HepG2 (cell line): ENCODE measurements at regions of chr5 and their contacts with region 1.

Region 1: GRCh38 chr5:151002250-151002649 is 18.1 kb upstream of the GPX3 start:
- DNase-seq: peak; percentile 58
- ATAC-seq: peak; percentile 28; the same call in 2 of the 3 replicates
- H3K4me3 ChIP-seq: no peak overlapping the region
- H3K27ac ChIP-seq: no peak overlapping the region
- H3K4me1 ChIP-seq: peaks cover 59% of the 10 kb centered on the region
- H3K27me3 ChIP-seq: no peaks in the 10 kb centered on the region
- CTCF ChIP-seq: peak; percentile 71
- EP300 ChIP-seq: no peak
- POLR2A ChIP-seq: no peak
- RAD21 ChIP-seq: peak; percentile 67

Region 2: GRCh38 chr5:150350524-150351344 is 651.5 kb before region 1 on chr5:
- CTCF ChIA-PET with region 1: no interaction called
- POLR2A ChIA-PET with region 1: no interaction called
- in situ Hi-C with region 1: no loop called
- intact Hi-C with region 1: no loop called
- DNase-seq: peak; percentile 91
- ATAC-seq: peak; percentile 98
- H3K4me3 ChIP-seq: peak overlapping the region in 1 of 3 experiments; percentile 11; a peak in 1 of 6 replicates
- H3K27ac ChIP-seq: no peak overlapping the region
- H3K4me1 ChIP-seq: peaks cover 61% of the 10 kb centered on the region
- H3K27me3 ChIP-seq: no peaks in the 10 kb centered on the region; a peak in 1 of 5 replicates
- CTCF ChIP-seq: peak; percentile 98
- EP300 ChIP-seq: peak in 1 of 2 experiments; percentile 41; a peak in 1 of 4 replicates
- POLR2A ChIP-seq: no peak
- RAD21 ChIP-seq: peak; percentile 93

Region 3: GRCh38 chr5:151020304-151021110 is 18.3 kb after region 1 on chr5 and contains the start of gene GPX3:
- CTCF ChIA-PET with region 1: no interaction called
- POLR2A ChIA-PET with region 1: interaction called, 31 read pairs
- in situ Hi-C with region 1: no loop called
- intact Hi-C with region 1: loop called (anchors 1 kb)
- DNase-seq: peak; percentile 92
- ATAC-seq: peak; percentile 97
- H3K4me3 ChIP-seq: peak within 1 kb of the TSS; percentile 72 to 90 (median 88)
- H3K27ac ChIP-seq: peak within 1 kb of the TSS; percentile 58
- H3K4me1 ChIP-seq: peaks cover 89% of the 10 kb centered on the region
- H3K27me3 ChIP-seq: no peaks in the 10 kb centered on the region; a peak in 1 of 5 replicates
- CTCF ChIP-seq: no peak
- EP300 ChIP-seq: no peak
- POLR2A ChIP-seq: peak; percentile 94 to 100
- RAD21 ChIP-seq: no peak
- total RNA-seq, gene GPX3: 31.9 and 33.8 TPM in 2 replicates

Region 4: GRCh38 chr5:151051066-151051930 is 49.0 kb after region 1 on chr5:
- CTCF ChIA-PET with region 1: interaction called, 27 read pairs
- POLR2A ChIA-PET with region 1: no interaction called
- in situ Hi-C with region 1: loop called (anchors 5 kb)
- intact Hi-C with region 1: loop called (anchors 1 kb)
- DNase-seq: peak; percentile 68
- ATAC-seq: peak; percentile 91
- H3K4me3 ChIP-seq: no peak overlapping the region
- H3K27ac ChIP-seq: no peak overlapping the region
- H3K4me1 ChIP-seq: no peaks in the 10 kb centered on the region
- H3K27me3 ChIP-seq: no peaks in the 10 kb centered on the region
- CTCF ChIP-seq: peak; percentile 88
- EP300 ChIP-seq: no peak
- POLR2A ChIP-seq: no peak
- RAD21 ChIP-seq: peak; percentile 83

Region 5: DNA sequence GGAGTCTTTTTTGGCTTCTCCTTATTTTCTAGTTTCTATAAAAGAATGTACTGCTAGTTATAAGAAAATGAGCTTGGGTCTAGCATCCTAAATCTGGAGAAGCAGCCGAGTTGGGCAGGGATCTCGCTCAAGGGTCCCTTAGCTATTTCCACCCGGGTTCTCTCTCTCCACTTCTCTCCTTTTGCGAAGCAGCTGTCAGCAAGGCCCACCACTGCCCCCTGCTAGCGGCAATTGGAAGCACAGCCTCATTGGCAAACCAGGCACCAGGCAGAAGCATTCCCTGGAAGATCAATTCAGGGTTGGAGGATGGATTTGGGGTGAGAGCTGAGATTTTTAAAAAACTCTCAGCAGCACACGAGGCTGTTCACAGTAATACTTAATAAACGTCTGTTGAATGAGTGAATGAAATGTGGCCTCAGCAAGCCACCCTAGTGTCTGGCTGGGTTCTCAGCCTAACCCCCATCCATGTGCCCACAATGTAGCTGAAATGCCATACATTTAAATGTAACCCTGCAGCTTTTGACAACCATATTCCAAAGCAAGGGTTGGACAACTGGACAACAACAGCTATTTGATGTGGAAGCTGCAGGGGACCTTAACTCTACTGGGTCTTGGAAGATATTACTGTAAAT is 113.1 kb after region 1 on chr5:
- CTCF ChIA-PET with region 1: interaction called, 19 read pairs
- POLR2A ChIA-PET with region 1: no interaction called
- in situ Hi-C with region 1: no loop called
- intact Hi-C with region 1: loop called (anchors 1 kb)
- DNase-seq: peak; percentile 32
- ATAC-seq: peak; percentile 81
- H3K4me3 ChIP-seq: no peak overlapping the region
- H3K27ac ChIP-seq: no peak overlapping the region
- H3K4me1 ChIP-seq: no peaks in the 10 kb centered on the region
- H3K27me3 ChIP-seq: no peaks in the 10 kb centered on the region; a peak in 1 of 5 replicates
- CTCF ChIP-seq: peak; percentile 92
- EP300 ChIP-seq: no peak
- POLR2A ChIP-seq: no peak
- RAD21 ChIP-seq: peak; percentile 77

Region 6: DNA sequence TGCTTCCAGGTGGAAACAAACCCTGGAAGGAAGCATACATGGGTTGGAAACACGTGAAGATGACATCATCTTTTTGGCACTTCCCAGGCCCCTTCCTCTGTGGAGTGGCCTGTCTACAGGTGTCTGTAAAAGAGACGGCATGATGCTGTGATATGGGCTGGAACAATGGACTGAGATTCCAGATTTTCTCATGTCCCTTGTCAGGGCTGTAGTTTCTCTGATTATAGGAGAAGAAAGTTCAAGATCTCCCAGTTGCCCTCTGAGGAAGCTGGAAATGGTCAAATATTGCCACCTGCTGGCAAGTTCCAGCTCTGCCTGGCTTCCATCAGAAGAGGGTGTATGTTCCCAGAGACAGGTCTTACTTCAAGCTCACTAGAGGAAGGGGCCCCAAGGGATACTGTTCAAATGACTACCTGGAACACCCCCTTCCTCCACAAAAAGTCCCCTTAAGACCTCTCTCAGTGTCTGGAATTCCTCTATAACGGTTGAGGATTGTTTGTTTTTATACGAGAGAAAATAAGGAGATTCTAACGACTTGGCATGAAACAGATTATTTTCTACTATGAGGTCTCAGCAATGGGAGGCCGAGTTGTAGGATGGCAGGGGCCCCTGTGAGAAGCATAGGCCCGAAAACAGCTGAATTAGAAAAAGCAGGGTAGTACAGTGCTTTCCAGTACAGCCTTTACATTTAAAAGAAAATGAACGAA is 162.6 kb after region 1 on chr5:
- CTCF ChIA-PET with region 1: no interaction called
- POLR2A ChIA-PET with region 1: no interaction called
- in situ Hi-C with region 1: no loop called
- intact Hi-C with region 1: loop called (anchors 1 kb)
- DNase-seq: peak; percentile 69
- ATAC-seq: peak; percentile 91
- H3K4me3 ChIP-seq: no peak overlapping the region
- H3K27ac ChIP-seq: no peak overlapping the region
- H3K4me1 ChIP-seq: peaks cover 31% of the 10 kb centered on the region
- H3K27me3 ChIP-seq: no peaks in the 10 kb centered on the region; a peak in 1 of 5 replicates
- CTCF ChIP-seq: peak; percentile 93
- EP300 ChIP-seq: no peak
- POLR2A ChIP-seq: no peak
- RAD21 ChIP-seq: peak; percentile 87

Region 7: DNA sequence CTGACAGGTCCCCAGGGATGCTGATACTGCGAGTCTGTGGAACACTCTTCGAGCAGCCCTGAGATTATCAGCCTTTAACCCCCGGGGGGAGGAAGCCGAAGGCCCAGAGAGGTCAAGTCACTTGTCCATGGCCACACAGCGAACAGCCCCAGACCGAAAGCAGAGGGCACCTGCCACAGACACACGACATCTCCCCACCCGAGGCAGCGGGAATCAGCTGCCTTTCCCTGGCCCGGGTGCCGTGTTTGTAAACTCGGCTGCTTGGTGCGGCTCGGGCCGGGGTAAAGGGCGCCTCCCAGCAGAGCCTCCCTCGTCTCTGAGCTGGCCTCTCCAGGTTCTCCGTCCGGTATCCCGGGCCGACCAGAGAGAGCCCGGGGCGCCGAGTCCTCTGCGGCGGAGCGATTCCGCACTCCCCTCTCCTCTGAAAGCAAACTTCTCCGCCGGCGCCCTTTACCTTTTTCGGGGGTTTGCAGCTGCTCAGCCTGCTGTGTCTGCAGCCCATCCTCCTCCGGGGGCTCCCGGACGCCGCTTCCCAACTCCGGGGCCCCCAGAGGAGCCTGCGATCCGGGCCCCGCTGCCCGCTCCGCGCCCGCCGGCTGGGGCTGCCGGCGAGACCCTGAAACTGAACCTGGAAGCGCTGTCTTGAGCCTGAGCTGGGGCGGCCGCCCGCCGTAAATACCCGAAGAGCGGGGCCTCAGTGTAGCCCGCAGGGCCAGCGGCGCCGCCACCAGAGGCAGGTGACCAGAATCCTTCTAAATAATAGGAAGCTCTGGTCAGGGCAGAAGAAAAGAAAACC is 221.4 kb after region 1 on chr5 and contains the start of gene CCDC69:
- CTCF ChIA-PET with region 1: no interaction called
- POLR2A ChIA-PET with region 1: no interaction called
- in situ Hi-C with region 1: no loop called
- intact Hi-C with region 1: loop called (anchors 10 kb)
- DNase-seq: peak; percentile 52
- ATAC-seq: peak; percentile 95
- H3K4me3 ChIP-seq: peak within 1 kb of the TSS; percentile 81 to 90 (median 87)
- H3K27ac ChIP-seq: peak within 1 kb of the TSS; percentile 66
- H3K4me1 ChIP-seq: peaks cover 29% of the 10 kb centered on the region
- H3K27me3 ChIP-seq: no peaks in the 10 kb centered on the region; a peak in 1 of 5 replicates
- CTCF ChIP-seq: 0 out of 2 replicates have a peak, but pooled peaks have one; percentile 21
- EP300 ChIP-seq: no peak
- POLR2A ChIP-seq: peak; percentile 58 to 67
- RAD21 ChIP-seq: peak; percentile 41; the same call in 1 of the 2 replicates
- total RNA-seq, gene CCDC69: 45.2 and 46.3 TPM in 2 replicates